GM12878 (cell line): ENCODE measurements at regions of chr5 and their contacts with region 1.

Region 1: GRCh38 chr5:91383027-91383955 is at the start of gene ARRDC3:
- DNase-seq: peak; percentile 82
- ATAC-seq: peak; percentile 69
- H3K4me3 ChIP-seq: peak within 1 kb of the TSS; percentile 95
- H3K27ac ChIP-seq: peak within 1 kb of the TSS; percentile 100
- H3K4me1 ChIP-seq: peaks cover 8% of the 10 kb centered on the region; the same call in 1 of the 2 replicates
- H3K27me3 ChIP-seq: no peaks in the 10 kb centered on the region
- CTCF ChIP-seq: no peak
- EP300 ChIP-seq: no peak
- POLR2A ChIP-seq: peak; percentile 98
- RAD21 ChIP-seq: no peak
- polyA plus RNA-seq, gene ARRDC3: 2.3 to 7.0 TPM

Region 2: GRCh38 chr5:90474235-90475109 is 908.8 kb before region 1 on chr5 and contains the starts of genes MBLAC2 and POLR3G:
- CTCF ChIA-PET with region 1: no interaction called
- POLR2A ChIA-PET with region 1: no interaction called
- RAD21 ChIA-PET with region 1: no interaction called
- SMC1A ChIA-PET with region 1: no interaction called
- in situ Hi-C with region 1: no loop called
- intact Hi-C with region 1: loop called (anchors 10 kb)
- DNase-seq: peak; percentile 77
- ATAC-seq: peak; percentile 86
- H3K4me3 ChIP-seq: peak within 1 kb of the TSS; percentile 89
- H3K27ac ChIP-seq: peak within 1 kb of the TSS; percentile 76
- H3K4me1 ChIP-seq: peaks cover 3% of the 10 kb centered on the region; the same call in 1 of the 2 replicates
- H3K27me3 ChIP-seq: no peaks in the 10 kb centered on the region
- CTCF ChIP-seq: peak in 2 of 3 experiments; percentile 13 to 53; a peak in 4 of 6 replicates
- EP300 ChIP-seq: 0 out of 4 replicates have a peak, but pooled peaks of 1 of the 2 experiments have one; percentile 7
- POLR2A ChIP-seq: peak; percentile 83
- RAD21 ChIP-seq: no peak
- polyA plus RNA-seq, gene MBLAC2: 2.0 to 2.8 TPM
- polyA plus RNA-seq, gene POLR3G: 42.1 to 50.9 TPM

Region 3: GRCh38 chr5:90940227-90940995 is 442.9 kb before region 1 on chr5:
- CTCF ChIA-PET with region 1: interaction called, 117 read pairs
- POLR2A ChIA-PET with region 1: interaction called, 11 read pairs
- RAD21 ChIA-PET with region 1: interaction called, 84 read pairs
- SMC1A ChIA-PET with region 1: interaction called, 92 read pairs
- in situ Hi-C with region 1: loop called (anchors 10 kb)
- intact Hi-C with region 1: loop called (anchors 5 kb)
- DNase-seq: peak; percentile 73
- ATAC-seq: peak; percentile 100
- H3K4me3 ChIP-seq: no peak overlapping the region
- H3K27ac ChIP-seq: no peak overlapping the region
- H3K4me1 ChIP-seq: no peaks in the 10 kb centered on the region
- H3K27me3 ChIP-seq: no peaks in the 10 kb centered on the region
- CTCF ChIP-seq: no peak
- EP300 ChIP-seq: no peak
- POLR2A ChIP-seq: no peak
- RAD21 ChIP-seq: no peak

Region 4: DNA sequence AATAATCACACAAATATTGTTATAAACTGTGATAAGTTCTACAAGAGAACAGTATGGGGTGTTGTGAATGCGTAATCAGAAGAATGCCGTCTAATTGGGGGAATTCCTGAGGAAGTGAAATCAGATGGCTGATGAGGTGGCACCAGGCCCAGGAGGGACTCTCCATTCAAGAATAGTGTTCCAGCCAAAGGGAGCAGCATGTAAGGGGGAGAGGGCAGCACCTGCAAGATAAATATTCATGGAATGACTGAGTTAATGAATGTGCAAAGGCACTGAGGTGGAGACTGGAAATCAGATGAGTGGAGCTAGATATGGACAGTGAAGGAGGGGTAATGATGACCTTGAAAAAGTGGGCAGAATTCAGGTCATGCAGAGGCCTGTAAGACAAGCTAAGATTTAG is 250.7 kb before region 1 on chr5:
- CTCF ChIA-PET with region 1: interaction called, 14 read pairs
- POLR2A ChIA-PET with region 1: interaction called, 4 read pairs
- RAD21 ChIA-PET with region 1: interaction called, 4 read pairs
- SMC1A ChIA-PET with region 1: no interaction called
- in situ Hi-C with region 1: no loop called
- intact Hi-C with region 1: no loop called
- DNase-seq: peak; percentile 36
- ATAC-seq: peak; percentile 90
- H3K4me3 ChIP-seq: no peak overlapping the region
- H3K27ac ChIP-seq: no peak overlapping the region
- H3K4me1 ChIP-seq: no peaks in the 10 kb centered on the region
- H3K27me3 ChIP-seq: no peaks in the 10 kb centered on the region
- CTCF ChIP-seq: no peak
- EP300 ChIP-seq: 0 out of 4 replicates have a peak, but pooled peaks of 1 of the 2 experiments have one; percentile 12
- POLR2A ChIP-seq: no peak
- RAD21 ChIP-seq: no peak

Region 5: GRCh38 chr5:91219803-91220371 is 163.4 kb before region 1 on chr5:
- CTCF ChIA-PET with region 1: interaction called, 166 read pairs
- POLR2A ChIA-PET with region 1: interaction called, 7 read pairs
- RAD21 ChIA-PET with region 1: interaction called, 53 read pairs
- SMC1A ChIA-PET with region 1: interaction called, 132 read pairs
- in situ Hi-C with region 1: loop called (anchors 5 kb)
- intact Hi-C with region 1: no loop called
- DNase-seq: no peak
- ATAC-seq: no peak; the same call in 2 of the 3 replicates
- H3K4me3 ChIP-seq: no peak overlapping the region
- H3K27ac ChIP-seq: no peak overlapping the region
- H3K4me1 ChIP-seq: no peaks in the 10 kb centered on the region
- H3K27me3 ChIP-seq: no peaks in the 10 kb centered on the region; a peak in 1 of 4 replicates
- CTCF ChIP-seq: peak; percentile 36 to 47 (median 39)
- EP300 ChIP-seq: no peak
- POLR2A ChIP-seq: no peak
- RAD21 ChIP-seq: peak; percentile 41

Region 6: DNA sequence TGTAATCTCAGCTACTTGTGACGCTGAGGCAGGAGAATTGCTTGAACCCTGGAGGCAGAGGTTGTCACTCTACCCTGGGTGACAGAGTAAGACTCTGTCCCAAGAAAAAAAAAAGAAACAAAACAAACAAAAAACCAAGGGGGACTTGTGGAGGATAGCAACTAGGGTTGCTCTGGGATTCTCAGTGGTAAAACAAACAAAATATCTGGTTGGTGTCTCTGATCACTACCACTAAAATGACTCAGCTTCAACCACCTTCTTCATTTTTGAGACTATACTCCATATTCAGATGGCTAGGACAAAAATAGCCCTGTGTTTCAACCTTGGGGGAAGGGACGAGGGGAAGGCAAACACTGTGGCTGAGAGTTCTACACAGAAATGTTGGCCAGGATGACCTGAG is 110.4 kb before region 1 on chr5:
- CTCF ChIA-PET with region 1: interaction called, 10 read pairs
- POLR2A ChIA-PET with region 1: interaction called, 9 read pairs
- RAD21 ChIA-PET with region 1: interaction called, 20 read pairs
- SMC1A ChIA-PET with region 1: interaction called, 18 read pairs
- in situ Hi-C with region 1: loop called (anchors 5 kb)
- intact Hi-C with region 1: loop called (anchors 2 kb)
- DNase-seq: peak; percentile 84
- ATAC-seq: peak; percentile 88
- H3K4me3 ChIP-seq: peak overlapping the region; percentile 32; the same call in 1 of the 2 replicates
- H3K27ac ChIP-seq: no peak overlapping the region
- H3K4me1 ChIP-seq: peaks cover 13% of the 10 kb centered on the region
- H3K27me3 ChIP-seq: no peaks in the 10 kb centered on the region; a peak in 2 of 4 replicates
- CTCF ChIP-seq: no peak
- EP300 ChIP-seq: peak; percentile 78 to 88
- POLR2A ChIP-seq: no peak
- RAD21 ChIP-seq: peak; percentile 22; the same call in 1 of the 2 replicates

Region 7: DNA sequence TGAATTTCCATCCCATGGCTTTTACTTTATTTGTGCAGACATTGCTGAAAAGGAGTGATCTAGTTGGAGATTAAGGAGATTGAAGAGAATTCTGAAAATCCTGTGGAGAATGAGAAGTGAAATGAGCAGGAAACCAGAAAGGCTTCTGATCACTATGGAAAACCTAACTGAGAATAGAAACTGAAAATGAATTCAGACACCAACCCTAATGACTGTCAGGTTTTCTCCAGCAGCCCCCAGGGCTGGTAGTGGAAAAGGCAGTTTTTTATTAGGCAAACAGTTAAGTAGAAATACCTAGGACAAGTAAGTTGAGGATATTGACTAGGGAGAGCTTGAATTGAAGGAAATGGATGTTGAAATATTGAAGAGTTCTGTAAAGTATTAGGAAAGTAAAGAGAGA is 14.5 kb after region 1 on chr5:
- CTCF ChIA-PET with region 1: interaction called, 23 read pairs
- POLR2A ChIA-PET with region 1: interaction called, 4 read pairs
- RAD21 ChIA-PET with region 1: interaction called, 4 read pairs
- SMC1A ChIA-PET with region 1: interaction called, 12 read pairs
- in situ Hi-C with region 1: no loop called
- intact Hi-C with region 1: no loop called
- DNase-seq: no peak
- ATAC-seq: peak; percentile 61
- H3K4me3 ChIP-seq: no peak overlapping the region
- H3K27ac ChIP-seq: no peak overlapping the region
- H3K4me1 ChIP-seq: no peaks in the 10 kb centered on the region; the same call in 1 of the 2 replicates
- H3K27me3 ChIP-seq: no peaks in the 10 kb centered on the region
- CTCF ChIP-seq: no peak
- EP300 ChIP-seq: no peak
- POLR2A ChIP-seq: no peak
- RAD21 ChIP-seq: no peak

Region 8: GRCh38 chr5:91464886-91465646 is 81.8 kb after region 1 on chr5:
- CTCF ChIA-PET with region 1: no interaction called
- POLR2A ChIA-PET with region 1: no interaction called
- RAD21 ChIA-PET with region 1: no interaction called
- SMC1A ChIA-PET with region 1: no interaction called
- in situ Hi-C with region 1: no loop called
- intact Hi-C with region 1: no loop called
- DNase-seq: no peak
- ATAC-seq: no peak
- H3K4me3 ChIP-seq: no peak overlapping the region
- H3K27ac ChIP-seq: no peak overlapping the region
- H3K4me1 ChIP-seq: no peaks in the 10 kb centered on the region
- H3K27me3 ChIP-seq: no peaks in the 10 kb centered on the region
- CTCF ChIP-seq: no peak
- EP300 ChIP-seq: no peak
- POLR2A ChIP-seq: no peak
- RAD21 ChIP-seq: no peak

Region 9: DNA sequence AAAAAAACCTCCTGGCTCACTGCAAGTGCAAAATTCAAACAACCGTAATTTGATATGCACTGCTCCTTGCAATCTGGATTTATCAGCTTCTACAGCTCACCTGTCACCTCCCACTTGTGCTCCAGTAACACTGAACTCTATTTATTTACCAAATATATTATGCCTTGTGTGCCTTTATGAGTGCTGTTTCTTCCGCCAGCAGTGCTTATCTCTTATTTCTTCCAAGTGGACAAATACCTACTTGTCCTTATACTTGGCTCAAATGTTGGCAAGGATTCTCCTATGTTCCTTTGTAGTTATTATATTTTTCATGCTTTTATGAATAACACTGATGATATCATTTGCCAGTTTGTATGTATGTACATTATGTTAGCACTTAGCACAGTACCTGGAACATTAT is 145.5 kb after region 1 on chr5:
- CTCF ChIA-PET with region 1: no interaction called
- POLR2A ChIA-PET with region 1: no interaction called
- RAD21 ChIA-PET with region 1: no interaction called
- SMC1A ChIA-PET with region 1: no interaction called
- in situ Hi-C with region 1: no loop called
- intact Hi-C with region 1: no loop called
- DNase-seq: no peak
- ATAC-seq: no peak
- H3K4me3 ChIP-seq: no peak overlapping the region
- H3K27ac ChIP-seq: no peak overlapping the region
- H3K4me1 ChIP-seq: no peaks in the 10 kb centered on the region
- H3K27me3 ChIP-seq: no peaks in the 10 kb centered on the region
- CTCF ChIP-seq: no peak
- EP300 ChIP-seq: no peak
- POLR2A ChIP-seq: no peak
- RAD21 ChIP-seq: no peak